Cardiac septum (tissue), 1 donor: ENCODE measurements at regions of chr3 and their contacts with region 1.

Region 1: DNA sequence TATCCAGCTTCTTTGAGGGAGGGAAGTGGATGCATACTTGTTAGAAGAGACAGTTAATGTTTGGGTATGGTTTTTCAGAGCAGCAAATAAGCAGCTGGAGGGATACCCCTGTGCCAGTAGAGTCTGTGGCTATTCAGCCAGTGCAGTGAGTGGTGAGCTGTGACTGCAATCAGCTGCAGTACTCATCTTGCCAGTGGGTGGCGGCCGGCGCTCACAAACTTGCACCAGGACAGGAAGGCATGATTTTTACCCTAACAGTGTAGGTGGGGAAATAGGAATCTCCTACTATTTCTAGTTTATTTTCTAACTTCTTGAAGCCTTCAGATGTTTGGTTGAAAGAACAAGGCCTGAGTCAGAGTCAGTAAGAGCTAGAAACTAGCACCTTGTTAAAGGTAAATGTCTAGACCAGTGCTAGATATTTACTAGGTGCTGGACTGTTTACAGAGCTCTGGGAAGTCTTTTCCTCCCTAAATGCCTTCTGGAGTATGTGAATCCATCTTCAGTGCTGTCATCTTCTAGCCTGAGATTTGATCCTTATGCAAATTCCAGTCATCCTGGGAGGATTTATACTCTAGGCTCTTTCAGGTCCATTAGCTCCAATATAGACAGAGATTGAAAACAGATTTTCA is 23.6 kb downstream of the TIMP4 start:
- DNase-seq: peak; percentile 88

Region 2: DNA sequence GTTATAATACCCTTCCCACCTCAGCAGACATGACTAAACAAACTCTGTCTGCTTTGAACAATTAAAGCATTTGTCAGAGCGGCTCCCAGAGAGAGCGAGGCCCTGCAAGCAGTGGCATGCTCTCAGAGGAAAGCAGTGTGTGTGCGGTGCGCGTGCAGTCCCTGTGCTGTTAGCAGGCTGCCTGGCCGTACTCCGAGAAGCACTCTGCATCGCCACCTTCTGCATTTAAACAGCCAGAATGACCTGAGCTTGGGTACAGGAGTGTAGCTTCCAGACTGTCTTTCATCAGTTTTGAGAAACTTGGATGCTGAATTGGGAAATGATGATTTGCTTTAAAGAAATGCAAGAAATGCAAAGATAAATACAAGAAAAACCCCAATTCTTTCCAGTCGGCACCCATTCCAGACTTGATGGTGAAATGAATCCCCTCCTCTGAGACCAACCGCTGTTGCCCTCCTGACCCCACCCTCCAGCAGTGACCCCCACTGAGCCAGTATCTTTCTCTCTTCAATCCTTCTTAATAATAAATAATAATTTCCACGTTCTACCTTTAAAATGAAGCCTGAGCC is 604.9 kb before region 1 on chr3:
- intact Hi-C with region 1: no loop called
- DNase-seq: no peak

Region 3: DNA sequence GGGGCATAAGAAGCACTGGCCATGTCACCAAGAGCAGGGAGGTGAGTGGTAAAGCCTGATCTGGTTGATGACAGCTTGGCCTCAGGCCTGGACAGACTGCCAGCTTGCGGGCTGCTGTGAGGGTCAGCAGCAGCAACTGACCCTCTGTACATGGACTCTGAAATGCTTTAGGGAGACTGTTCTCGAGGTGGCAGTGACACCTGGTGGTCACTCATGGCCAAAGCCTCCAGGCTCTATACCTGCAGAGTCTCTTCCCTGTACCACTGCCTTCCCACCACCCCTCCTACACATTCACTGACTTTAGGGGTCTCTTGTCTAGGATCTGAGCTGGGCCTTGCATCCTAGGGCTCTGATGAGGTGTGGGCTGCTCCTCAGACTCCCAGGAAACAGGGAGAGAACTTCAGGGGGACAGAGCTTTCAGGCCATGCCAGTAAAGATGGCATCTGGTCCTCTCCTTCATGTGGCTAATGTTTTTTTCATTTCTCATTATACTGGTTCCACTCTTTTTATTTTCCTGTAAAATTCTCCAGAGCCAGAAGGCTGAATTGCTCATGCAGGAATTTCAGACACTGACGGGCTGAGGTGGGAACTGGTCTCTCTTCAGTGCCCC is 40.8 kb after region 1 on chr3:
- intact Hi-C with region 1: loop called (anchors 1 kb)
- DNase-seq: peak; percentile 84